HEK293 (cell line): ENCODE measurements at regions of chr6 and their contacts with region 1.

Region 1: DNA sequence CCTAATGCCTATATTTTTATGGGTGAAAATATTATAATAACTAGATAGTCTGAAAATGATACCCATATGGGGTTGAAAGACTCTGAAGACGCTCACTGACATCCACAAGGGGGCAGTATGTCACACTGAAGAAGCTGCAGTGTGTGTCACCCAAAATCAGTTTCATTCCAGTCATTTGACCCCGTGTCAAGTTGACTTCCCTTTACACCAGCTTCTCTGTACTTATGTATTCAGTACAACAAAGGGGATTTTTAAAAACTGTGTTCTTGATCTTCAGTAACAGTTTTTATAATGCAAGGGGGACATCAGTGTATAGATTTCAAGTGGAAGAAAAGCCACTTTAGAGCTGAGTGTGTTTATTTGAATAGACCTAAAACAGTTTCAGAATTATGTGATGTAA is 19.3 kb downstream of the FAXC start:
- H3K4me3 ChIP-seq: no peak overlapping the region
- H3K27ac ChIP-seq: no peak overlapping the region
- H3K4me1 ChIP-seq: no peaks in the 10 kb centered on the region
- CTCF ChIP-seq: no peak

Region 2: GRCh38 chr6:99318542-99318941 is 11.6 kb before region 1 on chr6:
- CTCF ChIA-PET with region 1: interaction called, 44 read pairs
- POLR2A ChIA-PET with region 1: interaction called, 3 read pairs
- H3K4me3 ChIP-seq: no peak overlapping the region
- H3K27ac ChIP-seq: no peak overlapping the region
- H3K4me1 ChIP-seq: peaks cover 4% of the 10 kb centered on the region; the same call in 1 of the 2 replicates
- CTCF ChIP-seq: no peak

Region 3: GRCh38 chr6:99349171-99350141 is 19.3 kb after region 1 on chr6 and contains the start of gene FAXC:
- CTCF ChIA-PET with region 1: interaction called, 125 read pairs
- POLR2A ChIA-PET with region 1: interaction called, 6 read pairs
- H3K4me3 ChIP-seq: peak within 1 kb of the TSS; percentile 62
- H3K27ac ChIP-seq: peak within 1 kb of the TSS; percentile 83; the same call in 1 of the 2 replicates
- H3K4me1 ChIP-seq: peaks cover 5% of the 10 kb centered on the region; the same call in 1 of the 2 replicates
- CTCF ChIP-seq: peak; percentile 68

Region 4: DNA sequence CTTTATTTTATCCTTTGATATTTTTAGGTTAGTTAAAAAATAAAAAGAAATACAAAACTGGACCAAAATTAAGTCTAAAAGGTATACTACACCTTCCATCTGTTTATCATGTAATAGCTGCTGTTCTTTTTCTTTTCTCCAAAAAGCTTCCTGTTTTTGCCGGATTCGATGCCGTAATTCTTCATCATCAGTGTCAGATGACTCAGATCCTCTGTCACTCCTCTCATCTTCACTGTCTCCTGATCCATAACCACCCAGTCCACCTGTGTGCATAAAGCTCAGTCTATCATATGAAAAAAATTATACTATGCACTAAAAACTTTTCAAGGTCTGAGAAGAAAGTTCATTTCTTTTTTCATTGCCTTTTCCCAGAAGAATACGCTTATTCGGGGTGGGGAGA is 72.3 kb after region 1 on chr6:
- CTCF ChIA-PET with region 1: interaction called, 12 read pairs
- POLR2A ChIA-PET with region 1: no interaction called
- H3K4me3 ChIP-seq: no peak overlapping the region
- H3K27ac ChIP-seq: no peak overlapping the region
- H3K4me1 ChIP-seq: no peaks in the 10 kb centered on the region
- CTCF ChIP-seq: no peak

Region 5: DNA sequence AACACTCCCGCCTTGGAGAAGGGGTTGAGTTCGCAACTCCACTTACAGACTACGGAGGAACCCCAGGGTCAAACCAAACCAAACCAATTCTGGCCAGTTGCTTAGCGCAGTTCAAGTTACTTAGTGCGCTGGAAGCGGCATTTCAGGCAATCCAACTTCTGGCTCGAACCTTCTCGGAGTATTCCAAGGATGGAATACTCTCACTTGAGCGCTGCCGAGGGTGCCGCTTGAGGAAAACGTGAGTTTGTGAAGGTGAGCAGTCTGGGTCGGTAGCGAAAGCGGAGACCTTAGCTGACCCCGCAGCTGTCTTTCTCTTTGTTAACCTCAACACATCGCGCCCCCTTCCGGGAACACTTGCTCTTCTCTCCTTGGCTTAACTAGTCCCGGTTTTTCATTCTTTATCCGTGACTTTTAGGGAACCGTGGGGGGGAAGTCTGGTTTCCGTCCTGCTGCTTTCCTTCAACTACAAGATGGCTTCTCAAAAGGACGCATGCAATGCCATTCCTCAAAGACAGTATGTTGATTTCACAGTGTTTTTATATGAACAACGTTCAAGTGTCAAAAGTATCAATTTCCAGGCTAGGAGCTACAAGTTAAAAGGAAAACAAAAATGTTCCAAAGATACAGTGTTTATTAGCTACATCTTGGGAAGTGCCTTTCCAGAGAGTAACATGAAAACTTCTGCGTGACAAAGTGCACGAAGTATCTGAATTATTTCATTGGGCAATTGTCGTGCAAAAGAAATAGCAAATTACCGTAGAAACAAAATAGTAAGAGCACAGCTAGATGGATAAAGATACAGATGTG is 95.7 kb after region 1 on chr6:
- CTCF ChIA-PET with region 1: interaction called, 16 read pairs
- POLR2A ChIA-PET with region 1: interaction called, 5 read pairs
- H3K4me3 ChIP-seq: peak overlapping the region; percentile 57
- H3K27ac ChIP-seq: peak overlapping the region; percentile 88
- H3K4me1 ChIP-seq: peaks cover 4% of the 10 kb centered on the region; the same call in 1 of the 2 replicates
- CTCF ChIP-seq: peak; percentile 72

Region 6: DNA sequence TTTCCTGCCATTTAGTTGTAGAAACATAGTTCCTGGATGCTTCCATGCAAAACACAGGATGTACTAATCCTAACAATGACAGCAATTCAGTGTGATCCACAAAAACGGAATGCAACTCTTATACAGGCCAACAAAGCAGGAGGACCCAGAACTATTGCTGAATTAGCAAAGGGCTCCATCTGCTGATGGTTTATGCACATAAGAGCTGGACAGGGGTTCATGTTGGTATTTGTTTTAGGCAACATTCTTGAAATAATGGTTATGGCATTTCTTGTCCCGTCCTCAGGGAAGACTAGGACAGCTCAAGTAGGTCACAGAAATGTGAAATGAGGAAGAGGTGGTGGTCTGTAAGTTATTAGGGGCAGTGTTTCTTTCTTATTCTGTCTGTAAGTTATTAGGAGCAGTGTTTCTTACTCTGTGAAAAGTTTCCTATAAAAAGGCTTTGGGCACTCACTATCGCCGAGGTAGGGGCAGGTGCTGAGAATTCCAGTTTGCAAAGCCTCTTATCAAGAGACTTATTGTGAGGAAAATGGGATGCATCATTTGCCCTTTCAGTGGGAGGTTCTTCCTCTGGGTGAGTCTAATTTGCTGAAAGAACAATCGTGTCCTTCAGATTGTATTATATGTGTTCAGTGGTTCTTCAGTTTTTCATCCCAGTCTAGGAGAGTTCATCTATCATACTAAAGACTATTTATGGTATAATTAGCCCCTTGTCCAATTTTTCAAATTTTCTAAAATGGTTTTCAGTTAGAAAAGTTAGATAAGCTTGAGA is 492.8 kb after region 1 on chr6:
- CTCF ChIA-PET with region 1: interaction called, 11 read pairs
- POLR2A ChIA-PET with region 1: no interaction called
- H3K4me3 ChIP-seq: no peak overlapping the region
- H3K27ac ChIP-seq: no peak overlapping the region
- H3K4me1 ChIP-seq: no peaks in the 10 kb centered on the region
- CTCF ChIP-seq: peak; percentile 52; the same call in 1 of the 2 replicates